BJ (cell line): ENCODE measurements at regions of chr18 and their contacts with region 1.

Region 1: GRCh38 chr18:33135951-33136660 is 304.4 kb downstream of the CCDC178 start:
- DNase-seq: no peak
- H3K4me3 ChIP-seq: no peak overlapping the region
- H3K27me3 ChIP-seq: no peaks in the 10 kb centered on the region
- CTCF ChIP-seq: no peak

Region 2: GRCh38 chr18:33350256-33350655 is 214.2 kb after region 1 on chr18:
- CTCF ChIA-PET with region 1: no interaction called
- POLR2A ChIA-PET with region 1: interaction called, 16 read pairs
- DNase-seq: no peak
- H3K4me3 ChIP-seq: no peak overlapping the region
- H3K27me3 ChIP-seq: no peaks in the 10 kb centered on the region
- CTCF ChIP-seq: no peak

Region 3: DNA sequence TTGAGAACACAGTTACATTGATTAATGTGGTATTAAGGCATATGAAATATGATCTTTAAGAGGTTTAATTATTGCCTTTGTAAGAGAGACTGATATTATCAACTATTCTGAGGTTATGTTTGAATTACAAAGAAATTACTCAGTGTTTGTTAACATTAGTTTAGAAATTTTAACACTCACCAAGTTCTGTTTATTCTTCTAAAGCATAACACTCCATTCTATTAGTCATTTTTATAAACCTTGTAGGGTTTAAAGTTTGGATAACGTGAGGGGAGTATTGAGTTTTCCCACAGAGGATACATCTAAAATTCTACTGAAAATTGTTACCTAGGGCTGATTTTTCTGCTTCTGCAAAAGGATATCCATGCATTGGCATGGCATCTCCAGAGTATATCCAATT is 296.8 kb after region 1 on chr18:
- CTCF ChIA-PET with region 1: no interaction called
- POLR2A ChIA-PET with region 1: no interaction called
- DNase-seq: no peak
- H3K4me3 ChIP-seq: no peak overlapping the region
- H3K27me3 ChIP-seq: no peaks in the 10 kb centered on the region
- CTCF ChIP-seq: no peak